Heart right ventricle (tissue), 16 donors: ENCODE measurements at regions of chr7 and their contacts with region 1.

Region 1: GRCh38 chr7:23254051-23254681 is 7.6 kb downstream of the GPNMB start:
- DNase-seq: no peak
- ATAC-seq: no peak
- H3K4me3 ChIP-seq: no peak overlapping the region
- H3K27ac ChIP-seq: no peak overlapping the region
- H3K4me1 ChIP-seq: peaks cover 0 to 6% (median 1%) of the 10 kb centered on the region in 9 donors
- H3K27me3 ChIP-seq: peaks cover 0 to 13% (median 0%) of the 10 kb centered on the region in 7 donors
- CTCF ChIP-seq: no peak

Region 2: GRCh38 chr7:23191021-23191420 is 63.1 kb before region 1 on chr7:
- intact Hi-C with region 1: loop called in 5 of 10 experiments (anchors 5 to 10 kb)
- DNase-seq: no peak
- ATAC-seq: peak in 2 of 8 donors; percentile 14 to 28
- H3K4me3 ChIP-seq: no peak overlapping the region
- H3K27ac ChIP-seq: no peak overlapping the region
- H3K4me1 ChIP-seq: peaks cover 0 to 20% (median 0%) of the 10 kb centered on the region in 9 donors
- H3K27me3 ChIP-seq: no peaks in the 10 kb centered on the region
- CTCF ChIP-seq: no peak

Region 3: DNA sequence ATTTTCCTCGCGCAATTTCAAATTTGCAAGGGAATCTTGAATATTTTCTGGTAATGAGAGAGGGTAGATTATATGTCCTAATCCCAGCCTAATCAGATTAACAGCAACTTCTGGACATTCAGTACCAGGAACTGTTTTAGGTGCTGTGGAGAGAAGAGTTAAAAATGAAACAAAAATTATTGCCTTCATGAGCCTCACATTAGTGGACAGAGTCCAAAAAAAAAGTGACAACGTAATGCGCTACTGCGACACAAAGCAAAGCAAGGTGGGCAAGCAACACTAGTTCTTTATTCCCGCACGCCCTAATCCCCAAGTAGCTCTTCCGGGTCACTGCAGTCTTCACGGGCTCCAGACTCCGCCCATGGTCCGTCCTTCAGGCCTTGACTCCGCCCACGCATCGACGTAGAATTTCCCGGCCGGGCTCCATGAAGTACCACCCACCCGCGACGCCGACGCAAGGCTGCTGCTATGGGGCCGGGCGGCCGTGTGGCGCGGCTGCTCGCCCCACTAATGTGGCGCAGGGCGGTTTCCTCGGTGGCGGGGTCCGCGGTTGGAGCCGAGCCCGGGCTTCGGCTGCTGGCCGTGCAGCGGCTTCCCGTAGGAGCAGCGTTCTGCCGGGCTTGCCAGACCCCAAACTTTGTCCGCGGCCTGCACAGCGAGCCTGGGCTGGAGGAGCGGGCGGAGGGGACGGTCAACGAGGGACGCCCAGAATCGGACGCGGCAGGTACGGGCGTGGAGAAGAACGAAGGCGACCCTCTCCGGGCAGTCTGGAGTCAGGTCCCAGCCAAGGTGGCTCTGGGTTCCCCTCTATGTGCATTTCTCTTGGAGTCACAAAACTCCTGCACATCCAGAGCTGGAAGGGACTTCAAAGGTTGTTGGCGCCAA is 45.0 kb after region 1 on chr7 and contains the start of gene MALSU1:
- intact Hi-C with region 1: no loop called
- DNase-seq: peak; percentile 96 to 97
- ATAC-seq: peak; percentile 100
- H3K4me3 ChIP-seq: peak within 1 kb of the TSS; percentile 82 to 97 (median 92)
- H3K27ac ChIP-seq: peak within 1 kb of the TSS; percentile 32 to 94 (median 84)
- H3K4me1 ChIP-seq: peaks cover 0 to 51% (median 31%) of the 10 kb centered on the region in 9 donors
- H3K27me3 ChIP-seq: no peaks in the 10 kb centered on the region
- CTCF ChIP-seq: no peak
- total RNA-seq, gene MALSU1: 92.2 to 132 (median 99.3) TPM